Activated CD4-positive, alpha-beta memory T cell treated with anti-CD3 and anti-CD28 coated beads for 36 hours (primary cell): ENCODE measurements at regions of chr7 and their contacts with region 1.

Region 1: DNA sequence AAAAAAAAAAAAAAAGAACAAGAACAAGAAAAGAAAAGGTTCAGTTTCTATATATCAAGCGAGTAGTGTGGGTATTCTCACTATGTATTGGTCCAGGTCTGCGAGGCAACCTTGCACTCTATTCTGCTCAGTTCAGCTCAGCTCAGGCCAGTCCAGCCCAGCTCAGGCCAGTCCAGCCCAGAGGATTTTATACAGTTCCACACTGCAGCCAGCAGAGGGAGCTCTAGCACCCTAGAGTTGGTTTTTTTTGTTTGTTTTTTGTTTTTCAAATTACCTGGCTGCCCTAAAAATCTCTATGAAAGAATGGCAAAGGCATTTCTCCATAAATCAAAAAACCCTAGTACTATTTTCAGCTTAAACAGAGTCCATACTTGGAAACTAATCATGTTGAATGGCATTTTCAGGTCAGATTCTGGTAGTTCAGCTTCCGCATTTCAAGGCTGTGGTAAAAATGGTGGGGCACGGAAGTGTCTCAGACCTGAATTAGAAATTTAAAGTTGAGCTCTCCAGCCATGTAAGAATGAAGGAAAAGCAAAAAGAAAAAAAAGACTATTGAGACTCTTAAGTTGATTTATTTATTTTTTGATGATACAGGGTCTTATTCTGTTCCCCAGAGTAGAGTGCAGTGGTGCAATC is 55.2 kb upstream of the GSDME start:
- DNase-seq: peak; percentile 58
- H3K4me3 Mint-ChIP-seq: no peak overlapping the region
- H3K27ac Mint-ChIP-seq: no peak overlapping the region
- H3K4me1 Mint-ChIP-seq: no peaks in the 10 kb centered on the region
- H3K27me3 Mint-ChIP-seq: no peaks in the 10 kb centered on the region

Region 2: DNA sequence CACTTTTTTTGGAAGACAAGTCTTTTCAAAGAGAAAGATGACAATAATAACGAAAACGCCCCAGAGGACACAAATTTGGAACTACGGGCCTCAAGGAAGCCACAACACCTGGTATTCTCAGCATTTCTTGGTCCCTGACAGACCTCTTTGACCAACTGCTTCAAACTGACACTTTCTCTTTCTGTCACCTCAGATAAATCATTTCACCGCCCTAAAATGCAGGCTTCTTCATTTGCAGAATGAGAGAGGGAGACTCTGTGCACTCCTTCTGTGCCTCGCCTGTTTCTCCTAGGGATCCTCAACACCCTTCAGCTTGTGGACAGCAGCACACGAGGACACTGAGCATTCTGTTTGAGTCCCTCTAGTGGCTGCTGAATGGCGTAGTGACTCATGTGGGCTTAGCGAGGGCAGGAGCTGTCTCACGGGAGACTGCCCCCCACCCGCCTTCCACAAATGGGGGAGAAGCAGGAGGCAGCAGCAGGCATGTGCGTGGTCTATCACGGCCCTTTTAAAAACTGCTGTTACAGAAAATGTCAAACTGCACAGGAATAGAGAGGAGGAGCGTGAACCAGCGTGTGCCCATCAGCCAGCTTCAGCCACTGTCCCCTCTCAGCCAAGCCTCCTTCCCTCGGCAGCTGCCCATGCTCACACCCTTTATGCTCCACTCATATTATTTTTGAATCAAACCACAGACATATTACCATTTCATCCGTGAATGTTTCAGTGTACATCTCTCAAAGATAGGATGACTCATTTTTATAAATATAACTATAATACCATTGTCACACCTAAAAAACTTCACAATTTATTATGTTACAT is 96.6 kb before region 1 on chr7:
- CTCF ChIA-PET with region 1: no interaction called
- POLR2A ChIA-PET with region 1: no interaction called
- intact Hi-C with region 1: no loop called
- DNase-seq: no peak
- H3K4me3 Mint-ChIP-seq: no peak overlapping the region
- H3K27ac Mint-ChIP-seq: no peak overlapping the region
- H3K4me1 Mint-ChIP-seq: no peaks in the 10 kb centered on the region
- H3K27me3 Mint-ChIP-seq: peaks cover 17% of the 10 kb centered on the region

Region 3: DNA sequence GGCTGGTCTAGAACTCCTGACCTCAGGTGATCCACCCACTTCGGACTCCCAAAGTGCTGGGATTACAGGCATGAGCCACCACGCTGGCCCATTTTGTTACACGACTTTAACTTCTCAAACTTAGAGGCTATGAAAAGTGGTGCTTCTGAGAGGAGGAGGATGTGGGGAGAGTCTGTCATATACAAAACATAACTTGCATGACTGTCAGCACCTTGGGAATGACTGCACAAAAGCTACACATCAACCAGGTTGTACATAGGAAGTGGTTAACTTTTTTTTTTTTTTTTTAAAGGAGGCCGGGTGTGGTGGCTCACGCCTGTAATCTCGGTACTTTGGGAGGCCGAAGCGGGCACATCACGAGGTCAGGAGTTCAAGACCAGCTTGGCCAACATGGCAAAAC is 11.8 kb before region 1 on chr7:
- CTCF ChIA-PET with region 1: interaction called, 22 read pairs
- POLR2A ChIA-PET with region 1: no interaction called
- intact Hi-C with region 1: no loop called
- DNase-seq: peak; percentile 27
- H3K4me3 Mint-ChIP-seq: no peak overlapping the region
- H3K27ac Mint-ChIP-seq: no peak overlapping the region
- H3K4me1 Mint-ChIP-seq: peaks cover 10% of the 10 kb centered on the region
- H3K27me3 Mint-ChIP-seq: no peaks in the 10 kb centered on the region

Region 4: DNA sequence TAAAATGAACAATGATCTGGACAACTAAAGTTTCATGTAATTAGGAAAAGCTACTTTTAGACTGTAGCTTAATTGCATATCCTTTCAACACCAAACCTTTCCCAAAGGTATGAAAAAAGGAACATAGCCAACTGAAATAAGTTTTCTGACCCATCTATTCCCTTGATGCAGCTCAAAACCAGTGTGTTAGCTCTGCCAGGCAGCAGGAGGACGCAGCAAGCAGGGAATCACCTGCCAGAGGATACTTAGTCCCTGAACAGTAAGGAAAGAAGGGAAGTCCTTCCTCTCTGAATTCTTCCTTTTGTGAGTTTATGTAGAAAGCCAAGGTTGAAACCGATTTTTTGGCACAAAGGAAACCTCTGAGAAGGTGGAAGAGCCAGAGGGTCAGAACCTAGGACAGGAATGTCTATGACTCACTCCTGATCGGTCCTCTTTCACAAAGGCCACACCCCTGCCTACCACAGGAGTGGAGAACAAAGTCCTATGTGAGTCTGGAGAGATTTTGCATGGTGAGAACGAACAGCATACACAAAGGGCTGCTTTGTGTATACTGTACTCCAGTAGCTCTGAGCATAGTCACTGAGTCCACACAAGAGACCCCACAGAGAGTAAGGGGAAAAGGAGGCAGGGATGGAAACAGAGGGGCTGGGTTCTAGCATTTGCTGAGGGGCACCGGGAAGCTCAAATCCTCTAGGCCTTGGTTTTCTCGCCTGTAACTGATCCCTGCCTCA is 13.7 kb after region 1 on chr7:
- CTCF ChIA-PET with region 1: interaction called, 18 read pairs
- POLR2A ChIA-PET with region 1: no interaction called
- intact Hi-C with region 1: no loop called
- DNase-seq: no peak
- H3K4me3 Mint-ChIP-seq: peak overlapping the region; percentile 28
- H3K27ac Mint-ChIP-seq: peak overlapping the region; percentile 43
- H3K4me1 Mint-ChIP-seq: peaks cover 67% of the 10 kb centered on the region
- H3K27me3 Mint-ChIP-seq: no peaks in the 10 kb centered on the region

Region 5: GRCh38 chr7:24866004-24866615 is 53.7 kb after region 1 on chr7:
- CTCF ChIA-PET with region 1: no interaction called
- POLR2A ChIA-PET with region 1: no interaction called
- intact Hi-C with region 1: no loop called
- DNase-seq: peak; percentile 70
- H3K4me3 Mint-ChIP-seq: no peak overlapping the region
- H3K27ac Mint-ChIP-seq: peak overlapping the region; percentile 75
- H3K4me1 Mint-ChIP-seq: peaks cover 38% of the 10 kb centered on the region
- H3K27me3 Mint-ChIP-seq: no peaks in the 10 kb centered on the region

Region 6: GRCh38 chr7:25028370-25029021 is 216.1 kb after region 1 on chr7:
- CTCF ChIA-PET with region 1: interaction called, 10 read pairs
- POLR2A ChIA-PET with region 1: no interaction called
- intact Hi-C with region 1: no loop called
- DNase-seq: peak; percentile 42
- H3K4me3 Mint-ChIP-seq: peak overlapping the region; percentile 0
- H3K27ac Mint-ChIP-seq: peak overlapping the region; percentile 70
- H3K4me1 Mint-ChIP-seq: peaks cover 48% of the 10 kb centered on the region
- H3K27me3 Mint-ChIP-seq: no peaks in the 10 kb centered on the region

Region 7: DNA sequence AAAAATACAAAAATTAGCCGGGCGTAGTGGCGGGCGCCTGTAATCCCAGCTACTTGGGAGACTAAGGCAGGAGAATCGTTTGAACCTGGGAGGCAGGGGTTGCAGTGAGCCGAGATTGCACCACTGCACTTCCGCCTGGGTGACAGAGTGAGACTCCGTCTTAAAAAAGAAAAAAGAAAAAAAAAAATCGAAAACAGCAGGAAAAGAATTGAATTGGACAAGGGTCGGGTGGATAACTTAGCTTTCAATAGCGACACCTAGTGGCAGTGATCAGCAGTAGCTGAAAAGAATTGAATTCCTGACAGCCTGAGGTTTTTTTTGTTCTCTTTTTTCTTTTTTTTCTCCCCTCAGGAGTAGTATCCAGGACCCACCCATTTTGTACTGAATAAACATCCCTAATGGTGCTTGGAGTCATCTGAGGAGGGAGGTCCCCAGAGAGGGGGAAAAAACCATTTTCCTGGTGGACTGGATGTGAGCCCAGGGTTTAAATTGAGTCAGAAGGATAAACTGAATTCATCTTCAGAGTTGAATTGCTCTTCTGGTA is 257.5 kb after region 1 on chr7:
- CTCF ChIA-PET with region 1: interaction called, 117 read pairs
- POLR2A ChIA-PET with region 1: no interaction called
- intact Hi-C with region 1: loop called (anchors 1 kb)
- DNase-seq: peak; percentile 45
- H3K4me3 Mint-ChIP-seq: no peak overlapping the region
- H3K27ac Mint-ChIP-seq: no peak overlapping the region
- H3K4me1 Mint-ChIP-seq: peaks cover 26% of the 10 kb centered on the region
- H3K27me3 Mint-ChIP-seq: no peaks in the 10 kb centered on the region